ENCODE measurements at regions of chr1 and their contacts with region 1.

Region 1: GRCh38 chr1:47997289-47998200 is at the start of gene TRABD2B:
- DNase-seq: peak; percentile 85
- H3K27ac ChIP-seq: peak within 1 kb of the TSS; percentile 83
- CTCF ChIP-seq: peak; percentile 97

Region 2: DNA sequence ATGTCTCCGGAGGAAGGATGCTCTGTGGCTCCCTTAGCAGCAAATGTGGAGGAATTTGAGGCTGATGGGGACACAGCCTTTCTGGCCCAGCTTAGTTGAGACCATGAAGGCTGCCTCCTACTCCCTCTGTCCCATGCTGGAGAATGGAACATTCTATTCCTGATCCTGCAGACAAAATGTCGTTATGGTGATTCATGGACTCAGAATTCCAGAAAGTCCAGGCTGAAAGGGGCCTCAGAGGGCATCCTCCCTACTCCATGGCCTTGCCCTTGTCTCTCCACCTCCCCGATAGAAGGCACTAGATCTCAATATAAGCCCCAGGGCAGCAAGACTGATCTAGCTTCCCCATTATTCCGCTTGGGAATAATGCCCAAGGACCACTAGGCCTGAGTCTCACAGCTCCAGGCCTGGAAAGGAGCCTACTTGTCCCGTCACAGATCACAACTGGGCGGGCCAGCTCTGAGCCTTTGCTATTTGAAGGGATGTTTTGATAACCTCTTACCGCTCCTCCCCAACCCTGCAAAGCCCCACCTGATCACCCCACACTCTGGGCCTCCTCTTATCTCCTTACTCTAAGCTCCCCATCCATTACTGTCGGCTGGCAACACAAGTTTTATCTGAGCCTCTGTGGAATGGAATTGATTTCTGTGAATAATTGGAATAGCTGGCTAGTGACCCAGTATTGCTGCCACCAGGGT is 52.4 kb after region 1 on chr1:
- CTCF ChIA-PET with region 1: interaction called, 25 read pairs
- POLR2A ChIA-PET with region 1: no interaction called
- DNase-seq: no peak
- H3K27ac ChIP-seq: no peak overlapping the region
- CTCF ChIP-seq: no peak

Region 3: DNA sequence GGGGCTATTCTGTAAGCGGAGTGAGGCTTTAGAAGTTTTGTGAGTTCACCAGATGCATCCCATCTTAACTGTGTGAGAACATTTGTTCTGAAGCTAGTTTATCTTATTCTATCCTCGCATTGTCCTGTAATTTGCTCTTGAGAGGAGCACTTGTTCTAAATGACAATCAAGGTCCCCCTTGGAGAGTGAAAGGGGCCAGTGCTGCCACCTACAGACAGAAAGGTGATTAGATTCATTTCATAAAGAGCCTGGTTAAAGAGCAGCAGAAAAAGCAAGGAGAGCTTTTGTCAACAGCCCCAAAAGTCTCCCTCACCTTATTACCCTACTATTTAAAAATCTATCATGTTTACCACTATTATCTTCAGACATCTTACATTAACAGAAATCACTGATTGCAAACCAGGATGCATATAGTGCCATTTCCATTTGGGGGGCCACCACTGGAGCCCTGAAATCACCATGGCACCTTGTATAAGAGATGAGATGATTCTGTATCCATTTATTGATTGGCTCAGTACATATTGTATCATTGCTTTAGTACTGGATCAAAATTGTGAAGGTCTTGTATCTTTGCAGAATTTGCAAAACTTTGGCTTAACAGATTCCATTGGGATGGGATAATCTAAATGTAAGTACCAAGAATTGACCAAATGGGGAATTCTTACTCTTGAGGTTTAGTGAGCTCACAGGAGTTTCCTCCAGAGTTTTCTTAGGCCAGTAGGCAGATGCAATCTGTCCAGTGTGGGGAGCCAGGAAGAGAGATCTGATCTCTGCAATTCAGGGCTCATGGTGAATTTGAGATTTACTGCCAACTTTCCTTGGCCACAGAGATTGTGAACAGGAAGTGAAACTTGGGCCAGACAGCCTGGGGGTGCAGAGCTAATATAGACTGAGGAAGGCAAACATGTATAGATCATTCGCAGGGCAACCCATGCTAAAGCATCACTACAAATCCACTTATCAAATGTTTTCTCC is 63.9 kb after region 1 on chr1:
- CTCF ChIA-PET with region 1: interaction called, 43 read pairs
- POLR2A ChIA-PET with region 1: no interaction called
- DNase-seq: peak; percentile 62
- H3K27ac ChIP-seq: no peak overlapping the region
- CTCF ChIP-seq: peak; percentile 72

Region 4: DNA sequence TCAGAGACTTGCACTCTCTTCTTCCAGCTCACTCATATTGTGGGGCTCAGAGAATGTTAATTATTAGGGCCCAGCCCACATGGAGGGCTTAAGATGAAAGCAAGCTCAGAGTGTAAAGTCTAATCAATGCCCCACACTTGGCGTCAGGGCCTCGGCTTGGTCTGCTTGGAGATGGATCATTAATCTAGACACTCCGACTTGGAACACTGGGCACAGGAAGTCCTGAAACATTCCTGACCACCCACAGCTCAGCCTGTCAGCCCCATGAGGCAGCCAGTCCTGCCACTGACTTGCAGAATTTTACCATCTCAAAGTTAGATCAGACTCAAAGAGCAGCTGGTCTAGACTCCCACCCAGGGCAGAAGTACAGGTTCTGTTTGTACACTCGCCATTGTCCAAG is 69.4 kb after region 1 on chr1:
- CTCF ChIA-PET with region 1: interaction called, 13 read pairs
- POLR2A ChIA-PET with region 1: no interaction called
- DNase-seq: no peak
- H3K27ac ChIP-seq: no peak overlapping the region
- CTCF ChIP-seq: no peak

Region 5: GRCh38 chr1:48105165-48105564 is 107.6 kb after region 1 on chr1:
- CTCF ChIA-PET with region 1: no interaction called
- POLR2A ChIA-PET with region 1: no interaction called
- DNase-seq: no peak
- H3K27ac ChIP-seq: no peak overlapping the region
- CTCF ChIP-seq: no peak

Region 6: GRCh38 chr1:48341221-48341620 is 343.7 kb after region 1 on chr1:
- CTCF ChIA-PET with region 1: no interaction called
- POLR2A ChIA-PET with region 1: no interaction called
- DNase-seq: no peak
- H3K27ac ChIP-seq: no peak overlapping the region
- CTCF ChIP-seq: no peak